ENCODE measurements at regions of chr6 and their contacts with region 1.

Region 1: DNA sequence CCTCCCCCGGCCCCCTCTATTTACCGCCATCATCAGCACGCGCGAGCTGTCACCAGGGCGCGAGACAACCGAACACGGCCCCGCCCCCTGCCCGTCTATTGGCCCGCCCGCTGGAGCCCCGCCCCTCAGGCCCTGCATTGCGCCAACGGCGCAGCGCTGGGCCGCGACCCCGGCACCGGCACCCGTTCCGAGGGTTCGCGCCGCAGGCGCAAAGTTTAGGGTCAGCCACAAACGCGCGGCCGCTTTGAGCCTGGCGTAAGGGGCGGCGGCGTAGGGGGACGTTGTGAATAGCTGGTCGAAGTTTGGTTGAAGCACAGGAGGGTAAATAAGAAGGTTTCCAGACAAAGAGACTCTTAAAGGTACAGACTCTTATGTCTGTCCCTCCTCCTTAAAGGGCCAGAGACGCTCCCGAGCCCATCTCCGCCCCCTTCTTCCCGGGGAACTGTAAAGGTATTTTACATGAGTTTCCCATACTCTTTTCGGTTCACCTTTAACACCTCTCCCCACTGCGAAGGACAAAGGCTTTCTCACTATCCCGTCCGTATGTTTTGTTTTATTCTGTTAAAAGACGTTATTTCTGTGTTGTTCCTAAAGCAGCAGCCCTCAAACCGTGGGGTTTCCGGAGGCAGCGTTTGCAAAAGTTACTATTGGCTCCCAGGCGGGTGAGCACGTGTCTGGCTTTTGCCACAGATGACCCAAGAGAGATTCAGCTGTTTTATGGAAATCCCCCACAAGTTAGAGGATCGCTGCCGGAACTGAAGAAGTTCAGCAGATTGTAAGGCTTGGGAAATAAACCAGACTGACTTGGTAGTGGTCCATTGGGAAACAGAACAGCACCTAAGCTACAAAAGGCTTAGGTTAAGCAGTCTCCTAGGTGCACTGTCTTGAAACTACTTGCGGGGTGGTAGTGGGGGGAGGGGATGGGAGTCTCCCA is at the start of gene USP49:
- DNase-seq: peak; percentile 88 to 89
- ATAC-seq: peak; percentile 98 to 99 (median 98)
- H3K4me3 ChIP-seq: peak within 1 kb of the TSS; percentile 50 to 88 (median 72)
- H3K27ac ChIP-seq: peak within 1 kb of the TSS in 9 of 10 donors; percentile 53 to 94 (median 68)
- H3K4me1 ChIP-seq: peaks cover 0 to 34% (median 24%) of the 10 kb centered on the region in 9 donors
- H3K27me3 ChIP-seq: no peaks in the 10 kb centered on the region
- CTCF ChIP-seq: no peak
- total RNA-seq, gene USP49: 1.1 to 2.0 (median 1.7) TPM

Region 2: GRCh38 chr6:41846666-41847237 is 48.8 kb before region 1 on chr6:
- intact Hi-C with region 1: loop called in 1 of 10 experiments (anchors 2 kb)
- DNase-seq: peak in 1 of 2 donors; percentile 83
- ATAC-seq: peak; percentile 94 to 98 (median 96)
- H3K4me3 ChIP-seq: no peak overlapping the region
- H3K27ac ChIP-seq: peak overlapping the region in 7 of 10 donors; percentile 29 to 79 (median 57)
- H3K4me1 ChIP-seq: peaks cover 0 to 16% (median 13%) of the 10 kb centered on the region in 9 donors
- H3K27me3 ChIP-seq: no peaks in the 10 kb centered on the region
- CTCF ChIP-seq: peak; percentile 55 to 89 (median 80)